ENCODE measurements at regions of chr12 and their contacts with region 1.

Region 1: GRCh38 chr12:67222302-67222701 is 46.9 kb upstream of the CAND1 start:
- DNase-seq: no peak
- ATAC-seq: no peak
- H3K4me3 ChIP-seq: no peak overlapping the region
- H3K27ac ChIP-seq: no peak overlapping the region
- H3K4me1 ChIP-seq: no peaks in the 10 kb centered on the region
- H3K27me3 ChIP-seq: peaks cover 0 to 6% (median 0%) of the 10 kb centered on the region in 7 donors
- CTCF ChIP-seq: peak in 6 of 9 donors; percentile 14 to 46 (median 30)

Region 2: DNA sequence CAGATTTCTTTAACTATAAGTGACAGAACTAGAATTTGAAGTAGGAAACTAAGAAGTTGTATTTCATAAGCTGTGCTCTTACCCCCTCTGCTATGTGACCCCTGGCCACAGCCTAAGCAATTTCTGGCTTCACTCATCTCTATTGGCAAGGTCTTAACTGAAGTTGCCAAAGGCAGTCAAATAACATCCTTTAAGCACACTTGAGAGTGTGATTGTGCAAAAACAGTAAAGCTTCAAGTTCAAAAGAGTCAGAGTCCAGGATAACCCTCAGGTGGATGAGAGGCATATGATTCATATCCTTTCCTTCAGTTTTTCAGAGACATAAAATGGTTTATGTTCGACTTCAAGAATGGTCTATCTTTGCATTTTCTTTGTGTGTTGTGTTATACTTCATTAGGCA is 588.6 kb before region 1 on chr12:
- intact Hi-C with region 1: loop called in 1 of 10 experiments (anchors 5 kb)
- DNase-seq: no peak
- ATAC-seq: peak in 2 of 8 donors; percentile 42 to 70
- H3K4me3 ChIP-seq: no peak overlapping the region
- H3K27ac ChIP-seq: no peak overlapping the region
- H3K4me1 ChIP-seq: peaks cover 0 to 4% (median 0%) of the 10 kb centered on the region in 9 donors
- H3K27me3 ChIP-seq: no peaks in the 10 kb centered on the region
- CTCF ChIP-seq: no peak

Region 3: DNA sequence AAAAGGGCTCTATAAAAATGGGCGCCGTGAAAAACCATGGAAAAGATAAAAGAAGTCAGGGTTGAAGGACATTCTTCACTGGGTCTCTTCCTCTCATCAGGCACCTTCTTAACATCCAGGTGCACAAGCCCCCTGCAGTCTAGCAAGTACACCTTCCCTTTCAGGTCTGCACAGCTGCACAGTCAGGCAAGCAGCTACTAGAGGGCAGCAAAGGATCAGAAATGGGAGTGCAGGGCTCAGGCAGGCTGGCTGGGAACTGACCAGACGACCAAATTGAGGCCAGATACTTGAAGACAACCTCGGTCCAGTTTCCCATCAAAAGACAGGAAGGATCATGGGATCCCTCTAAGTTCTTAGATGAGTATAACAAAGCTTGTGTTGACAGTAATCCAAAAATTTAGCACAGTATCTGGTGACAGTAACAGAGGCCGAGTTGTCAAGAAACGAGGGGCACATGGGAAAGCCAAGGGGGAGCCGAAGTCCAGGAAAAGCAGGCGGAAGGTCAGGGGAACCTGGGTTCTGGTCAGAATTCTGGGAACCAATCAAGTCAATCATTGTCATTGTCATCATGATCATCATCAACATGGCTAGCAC is 533.4 kb before region 1 on chr12:
- intact Hi-C with region 1: loop called in 3 of 10 experiments (anchors 5 to 10 kb)
- DNase-seq: peak; percentile 13 to 17
- ATAC-seq: peak in 3 of 8 donors; percentile 61 to 79 (median 68)
- H3K4me3 ChIP-seq: no peak overlapping the region
- H3K27ac ChIP-seq: no peak overlapping the region
- H3K4me1 ChIP-seq: peaks cover 0 to 7% (median 0%) of the 10 kb centered on the region in 9 donors
- H3K27me3 ChIP-seq: peaks cover 0 to 13% (median 8%) of the 10 kb centered on the region in 7 donors
- CTCF ChIP-seq: peak; percentile 11 to 64 (median 48)

Region 4: GRCh38 chr12:67025543-67026114 is 196.7 kb before region 1 on chr12:
- intact Hi-C with region 1: loop called in 7 of 10 experiments (anchors 5 to 10 kb)
- DNase-seq: peak in 1 of 2 donors; percentile 5
- ATAC-seq: no peak
- H3K4me3 ChIP-seq: no peak overlapping the region
- H3K27ac ChIP-seq: no peak overlapping the region
- H3K4me1 ChIP-seq: no peaks in the 10 kb centered on the region
- H3K27me3 ChIP-seq: peaks cover 0 to 8% (median 0%) of the 10 kb centered on the region in 7 donors
- CTCF ChIP-seq: peak; percentile 26 to 72 (median 63)

Region 5: GRCh38 chr12:67161322-67161918 is 60.9 kb before region 1 on chr12:
- intact Hi-C with region 1: loop called in 4 of 10 experiments (anchors 2 to 5 kb)
- DNase-seq: peak in 1 of 2 donors; percentile 5
- ATAC-seq: no peak
- H3K4me3 ChIP-seq: no peak overlapping the region
- H3K27ac ChIP-seq: no peak overlapping the region
- H3K4me1 ChIP-seq: no peaks in the 10 kb centered on the region
- H3K27me3 ChIP-seq: no peaks in the 10 kb centered on the region
- CTCF ChIP-seq: peak; percentile 18 to 58 (median 46)